H1 (cell line): ENCODE measurements at regions of chr12 and their contacts with region 1.

Region 1: GRCh38 chr12:123801573-123802178 is 39.6 kb downstream of the DNAH10 start:
- DNase-seq: no peak
- H3K4me3 ChIP-seq: no peak overlapping the region
- H3K27ac ChIP-seq: no peak overlapping the region
- H3K4me1 ChIP-seq: no peaks in the 10 kb centered on the region
- H3K27me3 ChIP-seq: 0 out of 7 replicates have a peak, but pooled peaks cover 0 to 3% (median 0%) of the 10 kb centered on the region in 4 experiments
- CTCF ChIP-seq: peak in 2 of 3 experiments; percentile 14 to 31; a peak in 2 of 4 replicates
- EP300 ChIP-seq: no peak
- POLR2A ChIP-seq: no peak
- RAD21 ChIP-seq: peak; percentile 30 to 35; a peak in 2 of 4 replicates

Region 2: GRCh38 chr12:123757561-123757960 is 44.1 kb before region 1 on chr12:
- CTCF ChIA-PET with region 1: no interaction called
- POLR2A ChIA-PET with region 1: no interaction called
- DNase-seq: no peak
- H3K4me3 ChIP-seq: no peak overlapping the region
- H3K27ac ChIP-seq: no peak overlapping the region
- H3K4me1 ChIP-seq: peaks cover 0 to 3% (median 2%) of the 10 kb centered on the region in 4 experiments; a peak in 4 of 7 replicates
- H3K27me3 ChIP-seq: peaks cover 0 to 2% (median under 1%) of the 10 kb centered on the region in 4 experiments; a peak in 2 of 7 replicates
- CTCF ChIP-seq: no peak
- EP300 ChIP-seq: no peak
- POLR2A ChIP-seq: no peak
- RAD21 ChIP-seq: no peak

Region 3: GRCh38 chr12:123787466-123787865 is 14.2 kb before region 1 on chr12:
- CTCF ChIA-PET with region 1: interaction called, 14 read pairs
- POLR2A ChIA-PET with region 1: no interaction called
- DNase-seq: no peak
- H3K4me3 ChIP-seq: no peak overlapping the region
- H3K27ac ChIP-seq: no peak overlapping the region
- H3K4me1 ChIP-seq: no peaks in the 10 kb centered on the region
- H3K27me3 ChIP-seq: no peaks in the 10 kb centered on the region; a peak in 1 of 7 replicates
- CTCF ChIP-seq: no peak
- EP300 ChIP-seq: no peak
- POLR2A ChIP-seq: no peak
- RAD21 ChIP-seq: no peak

Region 4: GRCh38 chr12:123854918-123855317 is 53.2 kb after region 1 on chr12:
- CTCF ChIA-PET with region 1: no interaction called
- POLR2A ChIA-PET with region 1: no interaction called
- DNase-seq: no peak
- H3K4me3 ChIP-seq: no peak overlapping the region
- H3K27ac ChIP-seq: no peak overlapping the region
- H3K4me1 ChIP-seq: no peaks in the 10 kb centered on the region
- H3K27me3 ChIP-seq: no peaks in the 10 kb centered on the region
- CTCF ChIP-seq: no peak
- EP300 ChIP-seq: no peak
- POLR2A ChIP-seq: no peak
- RAD21 ChIP-seq: no peak